ENCODE measurements at regions of chr1 and their contacts with region 1.

Region 1: DNA sequence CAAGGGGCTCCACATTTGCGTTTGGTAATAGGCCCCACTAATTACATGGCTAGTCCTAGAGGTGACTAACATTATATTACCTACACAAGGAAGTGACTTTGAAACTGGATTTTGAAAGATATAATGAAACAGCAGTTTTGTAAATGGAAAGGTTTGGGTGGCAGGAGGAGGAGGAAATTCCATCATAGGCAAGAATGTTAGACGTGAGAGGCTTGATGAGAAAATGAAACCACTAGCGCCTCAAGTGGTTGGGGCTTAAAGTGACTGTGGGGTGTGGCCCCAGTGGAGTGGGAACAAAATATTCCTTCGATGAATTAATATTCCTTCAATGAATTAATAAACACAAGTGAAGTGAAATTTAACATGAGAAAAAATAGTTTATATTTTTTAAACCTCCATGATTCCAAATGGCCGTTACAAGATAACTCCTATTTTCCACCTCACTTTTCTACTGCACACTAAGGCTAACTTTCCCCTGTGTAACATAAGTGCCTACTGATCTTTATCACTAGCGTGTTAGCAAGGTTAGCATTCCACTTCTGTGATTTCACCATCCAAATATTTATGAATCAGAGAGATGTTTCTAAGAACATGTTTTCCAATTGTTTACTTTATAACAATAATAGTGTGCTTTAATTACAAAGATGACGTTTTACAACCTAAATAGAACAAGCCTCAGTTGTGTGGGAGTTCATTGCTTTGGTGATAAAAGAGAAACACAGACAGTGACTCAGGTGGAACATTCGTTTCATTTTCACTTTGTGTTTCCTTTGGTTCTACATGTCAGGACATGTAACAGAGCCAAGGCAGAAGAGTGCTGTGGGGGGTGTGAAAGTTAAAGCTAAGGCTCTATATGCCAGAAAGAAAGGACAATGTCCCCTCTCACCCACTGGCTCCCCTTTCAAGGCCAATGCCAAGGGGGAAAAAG is 12.5 kb upstream of the ATF3 start:
- DNase-seq: peak; percentile 97
- H3K4me3 Mint-ChIP-seq: peak overlapping the region; percentile 69
- H3K27ac Mint-ChIP-seq: peak overlapping the region; percentile 100
- H3K4me1 Mint-ChIP-seq: peaks cover 27% of the 10 kb centered on the region
- H3K27me3 Mint-ChIP-seq: peaks cover 30% of the 10 kb centered on the region
- CTCF ChIP-seq: peak; percentile 97

Region 2: DNA sequence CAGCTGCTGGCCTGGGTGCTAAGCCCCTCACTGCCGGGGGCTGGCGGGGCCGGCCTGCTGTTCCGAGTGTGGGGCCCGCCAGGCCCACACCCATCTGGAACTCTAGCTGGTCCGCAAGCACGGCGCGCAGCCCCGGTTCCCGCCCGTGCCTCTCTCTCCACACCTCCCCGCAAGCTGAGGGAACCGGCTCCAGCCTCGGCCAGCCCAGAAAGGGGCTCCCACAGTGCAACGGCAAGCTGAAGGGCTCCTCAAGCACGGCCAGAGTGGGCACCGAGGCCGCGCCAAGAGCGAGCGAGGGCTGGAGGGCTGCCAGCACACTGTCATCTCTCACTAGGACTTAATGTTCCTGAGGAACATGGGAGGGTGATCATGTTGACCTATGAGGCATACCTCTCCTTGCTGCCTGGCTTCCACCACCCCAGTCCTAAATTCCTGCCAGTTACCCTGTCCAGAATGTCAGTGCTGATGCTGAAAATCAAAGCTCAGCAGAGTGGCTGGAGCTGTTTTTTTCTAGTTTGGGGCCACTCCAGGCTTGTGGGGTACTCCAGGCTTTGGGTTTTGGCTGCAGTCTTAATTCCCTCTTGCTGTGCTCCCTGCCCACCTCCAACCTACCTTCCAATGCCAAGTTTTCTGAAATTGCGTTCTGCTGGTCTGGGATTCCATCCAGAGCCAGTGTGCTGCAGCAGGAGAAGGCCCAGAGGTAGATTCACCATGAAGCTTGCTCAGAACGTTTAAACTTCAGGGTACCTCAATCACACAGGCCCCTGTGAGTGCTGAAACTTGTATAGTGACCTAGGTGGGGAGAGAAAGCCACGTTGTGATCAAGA is 721.3 kb before region 1 on chr1:
- CTCF ChIA-PET with region 1: no interaction called
- POLR2A ChIA-PET with region 1: no interaction called
- intact Hi-C with region 1: no loop called
- DNase-seq: no peak
- H3K4me3 Mint-ChIP-seq: no peak overlapping the region
- H3K27ac Mint-ChIP-seq: no peak overlapping the region
- H3K4me1 Mint-ChIP-seq: no peaks in the 10 kb centered on the region
- H3K27me3 Mint-ChIP-seq: no peaks in the 10 kb centered on the region
- CTCF ChIP-seq: no peak

Region 3: GRCh38 chr1:212469701-212470458 is 126.2 kb before region 1 on chr1:
- CTCF ChIA-PET with region 1: interaction called, 10 read pairs
- POLR2A ChIA-PET with region 1: interaction called, 17 read pairs
- intact Hi-C with region 1: no loop called
- DNase-seq: peak; percentile 96
- H3K4me3 Mint-ChIP-seq: peak overlapping the region; percentile 49
- H3K27ac Mint-ChIP-seq: peak overlapping the region; percentile 90
- H3K4me1 Mint-ChIP-seq: peaks cover 10% of the 10 kb centered on the region
- H3K27me3 Mint-ChIP-seq: no peaks in the 10 kb centered on the region
- CTCF ChIP-seq: no peak

Measured in MCF 10A (cell line).